ENCODE measurements at regions of chr1 and their contacts with region 1.

Region 1: DNA sequence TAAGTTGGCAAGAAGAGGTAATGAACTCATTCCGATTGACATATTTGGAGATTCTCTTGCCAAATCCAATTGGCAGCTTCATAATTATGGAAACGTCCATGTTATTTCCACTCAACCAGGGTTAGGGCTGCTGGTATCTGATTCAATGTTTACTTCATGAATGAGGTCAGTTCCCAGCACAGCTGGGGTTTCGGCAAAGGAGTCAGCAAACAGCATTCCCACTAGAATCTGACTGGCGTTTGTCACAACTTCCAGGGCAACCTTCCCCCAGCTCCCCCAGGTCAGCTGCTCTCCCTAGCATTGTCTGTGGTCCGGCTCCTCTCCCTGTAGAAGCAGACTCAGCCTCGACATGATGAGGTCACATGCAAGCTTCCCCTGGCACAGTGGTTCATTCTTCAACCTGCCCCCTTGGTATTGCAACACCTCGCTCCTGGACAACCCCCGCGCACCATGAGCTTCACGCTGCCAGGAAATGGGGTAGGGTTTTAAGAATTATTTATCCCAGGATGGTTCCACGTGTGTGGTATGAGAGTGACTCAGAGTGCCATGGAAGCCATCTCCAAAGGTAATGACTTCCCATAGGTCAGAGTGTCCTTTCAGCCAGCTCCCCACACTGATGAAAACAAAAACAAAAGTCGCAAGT is 100.7 kb upstream of the SLC25A33 start:
- DNase-seq: peak; percentile 80 to 82
- ATAC-seq: peak; percentile 70
- H3K4me3 ChIP-seq: no peak overlapping the region
- H3K27ac ChIP-seq: peak overlapping the region; percentile 38 to 85
- H3K4me1 ChIP-seq: peaks cover 0 to 11% of the 10 kb centered on the region in 2 donors
- H3K27me3 ChIP-seq: no peaks in the 10 kb centered on the region

Region 2: DNA sequence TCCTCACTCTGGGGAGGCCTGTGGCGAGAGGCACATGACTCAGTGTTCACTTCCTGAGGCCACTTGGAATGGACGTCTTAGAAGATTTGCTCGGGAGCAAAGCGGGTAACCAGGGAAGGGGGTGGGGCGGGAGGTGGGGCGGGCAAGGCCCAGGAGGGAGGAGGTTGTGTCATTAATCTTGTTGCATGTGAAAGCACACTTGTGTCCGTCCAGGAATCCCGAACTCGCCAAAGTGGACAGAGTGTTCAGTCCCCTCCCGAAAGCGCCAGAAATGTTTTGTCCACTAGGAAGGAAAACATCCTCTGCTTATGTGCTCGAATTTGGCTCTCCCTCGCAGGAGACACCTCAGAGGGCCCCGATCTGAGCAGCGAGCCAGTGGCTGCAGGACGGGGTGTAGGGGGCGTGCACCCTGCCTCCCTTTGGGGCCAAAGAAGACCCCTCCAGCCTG is 61.6 kb before region 1 on chr1:
- intact Hi-C with region 1: loop called in 1 of 2 experiments (anchors 5 kb)
- DNase-seq: peak; percentile 79 to 86
- ATAC-seq: peak; percentile 86
- H3K4me3 ChIP-seq: no peak overlapping the region
- H3K27ac ChIP-seq: peak overlapping the region; percentile 62 to 97
- H3K4me1 ChIP-seq: peaks cover 0 to 2% of the 10 kb centered on the region in 2 donors
- H3K27me3 ChIP-seq: no peaks in the 10 kb centered on the region

Region 3: DNA sequence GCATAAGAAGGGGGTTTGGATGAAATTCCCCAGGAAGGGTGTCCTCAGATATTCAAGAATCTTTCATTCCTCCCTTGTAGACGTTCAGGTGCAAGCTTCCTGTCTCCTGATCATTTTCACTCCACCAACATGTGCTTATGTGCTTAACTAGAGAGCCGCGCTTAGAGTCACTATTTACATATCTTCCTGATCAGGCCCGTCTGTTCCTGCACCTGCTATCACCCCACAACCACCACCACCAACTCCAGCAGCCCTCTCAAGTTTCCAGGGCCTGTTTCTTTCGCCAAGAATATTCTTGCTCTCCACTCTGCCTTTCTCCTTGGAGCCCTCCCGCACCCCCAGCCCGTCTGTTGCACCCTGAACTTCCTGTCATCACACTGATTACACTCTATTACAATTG is 32.4 kb before region 1 on chr1:
- intact Hi-C with region 1: loop called in 1 of 2 experiments (anchors 5 kb)
- DNase-seq: no peak
- ATAC-seq: no peak
- H3K4me3 ChIP-seq: no peak overlapping the region
- H3K27ac ChIP-seq: no peak overlapping the region
- H3K4me1 ChIP-seq: peaks cover 0 to 3% of the 10 kb centered on the region in 2 donors
- H3K27me3 ChIP-seq: no peaks in the 10 kb centered on the region

Region 4: DNA sequence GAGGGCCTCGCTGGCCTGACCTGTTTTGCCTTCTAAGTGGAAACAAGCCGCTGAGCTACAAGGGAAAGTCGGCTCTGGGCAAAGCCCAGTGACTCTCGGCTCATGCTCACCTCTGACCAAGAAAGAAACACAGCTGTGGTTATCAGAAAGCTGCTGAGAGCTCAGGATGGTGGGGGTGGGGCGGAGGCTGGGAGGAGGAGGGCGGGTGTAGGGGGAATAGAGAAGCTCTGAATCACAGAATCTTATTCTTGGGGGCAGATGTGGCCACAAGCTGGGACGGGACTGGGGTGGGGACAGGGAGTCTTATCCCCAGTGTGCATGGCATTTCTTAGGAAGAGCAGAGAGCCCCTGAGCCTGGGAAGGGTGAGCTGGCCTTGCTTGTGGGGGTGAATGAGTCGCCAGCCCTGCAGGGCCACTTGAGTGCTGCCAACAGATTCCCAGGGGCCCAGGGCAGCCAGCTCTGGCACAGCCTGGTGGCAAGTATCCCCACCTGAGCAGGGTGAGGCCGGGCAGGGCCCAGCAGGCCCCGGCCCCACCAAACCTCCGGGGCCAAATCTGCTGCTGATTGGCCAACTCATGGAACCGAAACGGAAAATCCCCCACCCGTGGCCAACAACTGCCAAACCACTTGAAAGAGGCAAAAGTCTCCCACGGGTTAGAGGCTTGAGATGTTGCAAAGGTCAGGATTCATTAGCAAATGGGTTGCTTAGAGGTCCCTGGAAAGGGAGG is 25.2 kb before region 1 on chr1:
- intact Hi-C with region 1: loop called (anchors 2 to 5 kb)
- DNase-seq: peak; percentile 87 to 88
- ATAC-seq: peak; percentile 86
- H3K4me3 ChIP-seq: no peak overlapping the region
- H3K27ac ChIP-seq: peak overlapping the region; percentile 95 to 98
- H3K4me1 ChIP-seq: peaks cover 0 to 5% of the 10 kb centered on the region in 2 donors
- H3K27me3 ChIP-seq: no peaks in the 10 kb centered on the region

Measured in aorta (tissue), 5 donors.